Body of pancreas (tissue), 4 donors: ENCODE measurements at regions of chr3 and their contacts with region 1.

Region 1: DNA sequence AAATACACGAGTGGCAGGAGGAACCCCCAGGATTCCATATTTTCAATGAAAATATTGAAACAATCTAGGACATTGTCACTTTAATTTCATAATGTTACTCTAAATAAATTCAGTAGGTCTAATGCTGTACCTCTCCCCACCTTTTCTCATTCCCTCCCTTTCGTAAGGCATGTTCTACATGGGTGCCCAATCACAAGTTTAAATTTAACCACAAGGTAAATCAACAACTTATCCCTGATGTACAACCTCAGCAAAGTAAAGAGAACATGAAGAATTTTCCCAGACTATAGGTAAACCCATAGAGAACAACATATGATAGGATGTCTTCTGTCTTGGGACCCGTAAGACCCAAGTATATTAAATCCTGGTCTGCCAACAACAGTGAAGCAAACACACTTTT is 53.2 kb upstream of the MITF start:
- DNase-seq: no peak
- ATAC-seq: no peak
- H3K4me3 ChIP-seq: no peak overlapping the region
- H3K27ac ChIP-seq: no peak overlapping the region
- H3K4me1 ChIP-seq: no peaks in the 10 kb centered on the region
- H3K27me3 ChIP-seq: no peaks in the 10 kb centered on the region
- CTCF ChIP-seq: no peak
- POLR2A ChIP-seq: no peak

Region 2: DNA sequence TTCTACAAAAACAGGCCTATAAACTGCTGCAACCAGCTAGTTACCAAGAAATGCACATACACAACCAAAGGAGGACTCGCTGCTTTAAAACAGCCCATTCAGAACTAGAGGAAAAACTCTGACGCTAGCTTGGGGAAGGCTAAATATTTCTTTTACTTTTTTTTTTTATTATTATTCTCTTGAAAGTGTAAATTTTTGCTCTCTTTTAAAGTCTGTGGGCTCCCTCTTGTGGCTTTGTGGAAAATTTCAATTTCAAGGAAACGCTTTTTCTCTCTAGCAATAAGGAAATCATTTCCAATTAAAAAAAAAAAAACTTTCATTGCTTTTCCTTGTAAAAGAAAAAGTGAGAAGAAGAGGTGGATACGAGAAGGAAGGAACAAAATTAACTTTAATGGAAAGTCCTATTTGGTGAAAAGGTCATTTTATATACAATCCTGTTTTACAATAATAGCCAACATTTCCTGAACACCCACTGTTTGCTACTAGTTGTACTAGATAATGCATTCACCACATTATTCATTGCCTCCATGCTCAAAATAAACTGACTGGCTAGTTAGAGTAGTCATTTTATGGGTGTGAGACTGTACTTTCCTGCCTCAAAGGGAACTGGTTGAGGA is 262.3 kb after region 1 on chr3:
- intact Hi-C with region 1: loop called (anchors 5 kb)
- DNase-seq: peak in 1 of 4 donors; percentile 38
- ATAC-seq: peak; percentile 42
- H3K4me3 ChIP-seq: no peak overlapping the region
- H3K27ac ChIP-seq: no peak overlapping the region
- H3K4me1 ChIP-seq: peaks cover 20% of the 10 kb centered on the region
- H3K27me3 ChIP-seq: no peaks in the 10 kb centered on the region
- CTCF ChIP-seq: peak; percentile 11 to 79 (median 66)
- POLR2A ChIP-seq: no peak